Heart right ventricle (tissue), 16 donors: ENCODE measurements at regions of chr9 and their contacts with region 1.

Region 1: GRCh38 chr9:109320742-109321448 is at the start of gene EPB41L4B:
- DNase-seq: peak; percentile 81 to 85
- ATAC-seq: peak; percentile 79 to 94 (median 90)
- H3K4me3 ChIP-seq: peak within 1 kb of the TSS; percentile 18 to 54 (median 48)
- H3K27ac ChIP-seq: no peak within 1 kb of the TSS
- H3K4me1 ChIP-seq: peaks cover 2 to 24% (median 10%) of the 10 kb centered on the region in 9 donors
- H3K27me3 ChIP-seq: peaks cover 0 to 71% (median 36%) of the 10 kb centered on the region in 7 donors
- CTCF ChIP-seq: peak; percentile 73 to 92 (median 90)
- total RNA-seq, gene EPB41L4B: 2.4 to 15.2 (median 4.7) TPM

Region 2: GRCh38 chr9:108885643-108886348 is 435.1 kb before region 1 on chr9:
- intact Hi-C with region 1: loop called in 1 of 10 experiments (anchors 10 kb)
- DNase-seq: peak in 1 of 2 donors; percentile 20
- ATAC-seq: peak in 6 of 8 donors; percentile 28 to 69 (median 58)
- H3K4me3 ChIP-seq: no peak overlapping the region
- H3K27ac ChIP-seq: no peak overlapping the region
- H3K4me1 ChIP-seq: peaks cover 0 to 19% (median 4%) of the 10 kb centered on the region in 9 donors
- H3K27me3 ChIP-seq: no peaks in the 10 kb centered on the region
- CTCF ChIP-seq: no peak

Region 3: GRCh38 chr9:109182940-109183798 is 137.7 kb before region 1 on chr9:
- intact Hi-C with region 1: loop called in 1 of 10 experiments (anchors 10 kb)
- DNase-seq: no peak
- ATAC-seq: peak in 2 of 8 donors; percentile 21 to 54
- H3K4me3 ChIP-seq: no peak overlapping the region
- H3K27ac ChIP-seq: no peak overlapping the region
- H3K4me1 ChIP-seq: peaks cover 0 to 15% (median 0%) of the 10 kb centered on the region in 9 donors
- H3K27me3 ChIP-seq: peaks cover 0 to 7% (median 0%) of the 10 kb centered on the region in 7 donors
- CTCF ChIP-seq: peak in 6 of 9 donors; percentile 20 to 43 (median 32)

Region 4: GRCh38 chr9:109192732-109193361 is 128.0 kb before region 1 on chr9:
- intact Hi-C with region 1: loop called in 6 of 10 experiments (anchors 5 to 10 kb)
- DNase-seq: no peak
- ATAC-seq: peak in 4 of 8 donors; percentile 37 to 62 (median 42)
- H3K4me3 ChIP-seq: no peak overlapping the region
- H3K27ac ChIP-seq: no peak overlapping the region
- H3K4me1 ChIP-seq: peaks cover 0 to 3% (median 0%) of the 10 kb centered on the region in 9 donors
- H3K27me3 ChIP-seq: no peaks in the 10 kb centered on the region
- CTCF ChIP-seq: peak in 7 of 9 donors; percentile 27 to 49 (median 42)

Region 5: GRCh38 chr9:109369285-109369684 is 48.4 kb after region 1 on chr9:
- intact Hi-C with region 1: no loop called
- DNase-seq: no peak
- ATAC-seq: no peak
- H3K4me3 ChIP-seq: no peak overlapping the region
- H3K27ac ChIP-seq: no peak overlapping the region
- H3K4me1 ChIP-seq: no peaks in the 10 kb centered on the region
- H3K27me3 ChIP-seq: no peaks in the 10 kb centered on the region
- CTCF ChIP-seq: no peak